IMR-90 (cell line): ENCODE measurements at regions of chr7 and their contacts with region 1.

Region 1: GRCh38 chr7:136528329-136528728 is 340.1 kb upstream of the CHRM2 start:
- DNase-seq: peak; percentile 88
- ATAC-seq: peak; percentile 99
- H3K4me3 ChIP-seq: no peak overlapping the region
- H3K27ac ChIP-seq: no peak overlapping the region
- H3K4me1 ChIP-seq: peaks cover 3% of the 10 kb centered on the region; the same call in 1 of the 2 replicates
- H3K27me3 ChIP-seq: no peaks in the 10 kb centered on the region
- CTCF ChIP-seq: no peak
- POLR2A ChIP-seq: no peak
- RAD21 ChIP-seq: no peak

Region 2: GRCh38 chr7:136163340-136163801 is 365.0 kb before region 1 on chr7:
- CTCF ChIA-PET with region 1: no interaction called
- POLR2A ChIA-PET with region 1: no interaction called
- dilution Hi-C with region 1: no loop called
- in situ Hi-C with region 1: no loop called
- intact Hi-C with region 1: no loop called
- DNase-seq: no peak
- ATAC-seq: no peak
- H3K4me3 ChIP-seq: no peak overlapping the region
- H3K27ac ChIP-seq: no peak overlapping the region
- H3K4me1 ChIP-seq: no peaks in the 10 kb centered on the region
- H3K27me3 ChIP-seq: no peaks in the 10 kb centered on the region
- CTCF ChIP-seq: no peak
- POLR2A ChIP-seq: no peak
- RAD21 ChIP-seq: no peak

Region 3: GRCh38 chr7:137001041-137001440 is 472.7 kb after region 1 on chr7:
- CTCF ChIA-PET with region 1: no interaction called
- POLR2A ChIA-PET with region 1: no interaction called
- dilution Hi-C with region 1: no loop called
- in situ Hi-C with region 1: no loop called
- intact Hi-C with region 1: loop called (anchors 5 kb)
- DNase-seq: peak; percentile 55
- ATAC-seq: peak; percentile 52
- H3K4me3 ChIP-seq: no peak overlapping the region
- H3K27ac ChIP-seq: peak overlapping the region; percentile 97
- H3K4me1 ChIP-seq: peaks cover 29% of the 10 kb centered on the region
- H3K27me3 ChIP-seq: no peaks in the 10 kb centered on the region
- CTCF ChIP-seq: no peak
- POLR2A ChIP-seq: no peak
- RAD21 ChIP-seq: no peak